ENCODE measurements at regions of chr12 and their contacts with region 1.

Region 1: GRCh38 chr12:46523863-46524770 is 151.5 kb upstream of the SLC38A2 start:
- DNase-seq: peak; percentile 83
- H3K4me3 ChIP-seq: peak overlapping the region in 1 of 3 experiments; percentile 34
- H3K27ac ChIP-seq: peak overlapping the region; percentile 81
- H3K4me1 ChIP-seq: peaks cover 33% of the 10 kb centered on the region
- H3K27me3 ChIP-seq: no peaks in the 10 kb centered on the region
- CTCF ChIP-seq: no peak
- POLR2A ChIP-seq: no peak

Region 2: DNA sequence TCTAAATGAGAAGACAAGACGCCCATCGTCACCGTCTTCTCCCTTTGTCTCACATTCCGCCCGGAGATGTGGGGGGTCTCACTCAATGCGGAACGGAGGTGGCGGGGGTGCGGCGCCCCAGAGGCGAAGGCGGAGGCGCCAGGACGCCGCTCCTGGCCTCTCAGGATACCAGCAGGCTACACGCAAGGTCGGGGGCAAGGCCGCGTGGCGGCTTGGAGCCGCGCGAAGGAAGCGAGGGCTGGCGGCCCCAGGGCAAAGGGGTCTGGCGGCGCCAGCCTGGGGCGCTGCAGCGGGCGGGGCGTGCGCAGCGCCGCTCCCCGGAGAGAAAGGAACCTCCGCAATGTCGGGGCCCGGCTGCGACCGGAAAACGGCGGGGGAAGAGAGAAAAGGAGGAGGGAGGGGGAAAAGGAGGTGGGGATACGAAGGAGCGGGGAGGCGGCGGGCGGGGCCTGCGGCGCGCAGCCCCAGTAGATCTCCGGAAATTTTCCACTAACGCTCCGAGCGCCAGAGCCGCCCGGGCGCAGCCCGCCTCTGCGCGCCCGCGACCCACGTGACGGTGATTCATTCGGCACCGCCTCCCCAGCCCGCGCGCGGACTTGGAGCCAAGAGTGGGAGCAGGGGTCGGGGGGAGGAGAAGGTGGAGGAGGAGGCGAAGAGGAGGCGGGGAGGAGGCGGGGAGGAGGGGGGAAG is 141.0 kb before region 1 on chr12:
- CTCF ChIA-PET with region 1: no interaction called
- POLR2A ChIA-PET with region 1: no interaction called
- dilution Hi-C with region 1: no loop called
- intact Hi-C with region 1: loop called (anchors 1 kb)
- DNase-seq: peak; percentile 97
- H3K4me3 ChIP-seq: peak overlapping the region; percentile 39 to 68 (median 44)
- H3K27ac ChIP-seq: peak overlapping the region; percentile 98
- H3K4me1 ChIP-seq: peaks cover 44% of the 10 kb centered on the region
- H3K27me3 ChIP-seq: no peaks in the 10 kb centered on the region
- CTCF ChIP-seq: peak in 1 of 2 donors; percentile 14
- POLR2A ChIP-seq: peak; percentile 76

Region 3: DNA sequence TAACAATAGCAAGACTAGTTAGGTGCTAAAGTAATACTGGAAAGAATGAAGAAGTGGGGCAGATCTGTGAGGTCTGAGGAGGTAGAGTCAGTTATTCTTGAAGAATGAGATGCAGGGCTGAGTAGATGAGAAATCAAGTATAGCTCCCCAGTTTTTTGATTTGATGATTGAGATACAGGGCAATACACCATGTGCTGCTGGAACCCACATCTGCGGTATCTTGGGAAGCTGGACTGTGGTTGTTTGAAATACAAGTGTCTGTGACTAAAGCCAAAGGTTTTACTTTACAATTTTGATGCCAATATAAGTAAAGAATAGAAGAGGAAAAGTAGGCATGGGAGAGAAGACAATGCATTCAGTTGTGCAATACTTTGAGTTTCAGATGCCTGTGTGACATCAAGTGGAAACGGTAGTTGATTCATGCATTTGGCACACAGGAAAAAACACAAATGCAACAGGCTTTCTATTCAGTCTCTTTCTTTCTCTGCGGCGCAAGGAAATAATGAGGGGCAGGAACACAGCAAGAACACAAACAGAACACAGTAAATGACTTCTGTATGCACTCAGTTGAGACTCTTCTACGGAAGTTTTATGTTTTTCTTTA is 38.6 kb after region 1 on chr12:
- CTCF ChIA-PET with region 1: no interaction called
- POLR2A ChIA-PET with region 1: no interaction called
- dilution Hi-C with region 1: no loop called
- intact Hi-C with region 1: loop called (anchors 1 kb)
- DNase-seq: peak; percentile 94
- H3K4me3 ChIP-seq: peak overlapping the region in 1 of 3 experiments; percentile 28
- H3K27ac ChIP-seq: peak overlapping the region; percentile 96
- H3K4me1 ChIP-seq: peaks cover 24% of the 10 kb centered on the region
- H3K27me3 ChIP-seq: no peaks in the 10 kb centered on the region
- CTCF ChIP-seq: no peak
- POLR2A ChIP-seq: peak; percentile 39

Region 4: GRCh38 chr12:46573347-46573658 is 49.2 kb after region 1 on chr12:
- CTCF ChIA-PET with region 1: no interaction called
- POLR2A ChIA-PET with region 1: no interaction called
- dilution Hi-C with region 1: no loop called
- intact Hi-C with region 1: no loop called
- DNase-seq: no peak
- H3K4me3 ChIP-seq: no peak overlapping the region
- H3K27ac ChIP-seq: no peak overlapping the region
- H3K4me1 ChIP-seq: no peaks in the 10 kb centered on the region
- H3K27me3 ChIP-seq: no peaks in the 10 kb centered on the region
- CTCF ChIP-seq: no peak
- POLR2A ChIP-seq: no peak

Measured in endothelial cell of umbilical vein (primary cell).